Mucosa of descending colon (tissue), 3 donors: ENCODE measurements at regions of chr17 and their contacts with region 1.

Region 1: DNA sequence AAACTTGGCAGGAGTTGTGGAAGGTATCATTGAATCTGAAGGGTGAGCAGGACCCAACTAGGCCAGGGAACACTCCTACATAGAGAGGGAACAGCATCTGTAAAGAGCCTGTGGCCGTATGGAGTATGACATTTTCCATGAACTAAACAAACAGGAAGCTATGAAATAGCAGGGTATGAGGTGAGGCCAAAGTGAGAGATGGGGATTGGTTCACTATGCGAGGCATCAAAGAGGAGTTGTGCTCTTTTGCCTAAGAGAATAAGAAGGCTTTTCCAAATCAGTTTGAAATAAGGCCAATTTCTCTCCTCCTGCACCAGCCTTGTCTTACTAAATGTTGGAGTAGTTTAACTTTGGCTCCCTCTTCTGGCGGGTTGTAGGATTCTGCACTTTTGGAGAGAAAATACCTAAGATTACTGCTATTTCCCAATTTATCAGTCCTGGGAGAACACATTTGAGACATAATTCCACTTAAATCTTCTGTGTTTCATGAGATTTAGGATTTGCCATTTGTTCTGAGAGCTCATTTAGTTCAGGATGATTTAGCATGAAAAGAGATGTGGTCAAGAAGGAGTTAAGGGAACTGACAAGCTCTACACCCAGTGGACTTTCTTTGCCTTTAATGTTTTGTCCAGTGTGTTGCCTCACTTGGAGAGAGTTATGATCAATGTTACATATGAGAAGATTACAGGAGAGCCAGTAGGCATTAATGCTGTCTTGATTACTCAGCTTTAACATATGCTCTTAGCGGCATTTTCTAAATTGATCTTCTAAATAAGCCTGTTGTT is 55.4 kb downstream of the TNRC6C start:
- DNase-seq: peak in 1 of 3 donors; percentile 81
- ATAC-seq: peak; percentile 43
- H3K4me3 ChIP-seq: no peak overlapping the region
- H3K4me1 ChIP-seq: peaks cover 6% of the 10 kb centered on the region
- CTCF ChIP-seq: peak; percentile 41

Region 2: GRCh38 chr17:77542551-77543490 is 471.1 kb before region 1 on chr17:
- intact Hi-C with region 1: loop called (anchors 10 kb)
- DNase-seq: peak in 2 of 3 donors; percentile 76 to 86
- ATAC-seq: peak; percentile 88
- H3K4me3 ChIP-seq: no peak overlapping the region
- H3K4me1 ChIP-seq: peaks cover 6% of the 10 kb centered on the region
- CTCF ChIP-seq: peak; percentile 82

Region 3: GRCh38 chr17:77772461-77772897 is 241.4 kb before region 1 on chr17:
- intact Hi-C with region 1: loop called in 1 of 2 experiments (anchors 5 kb)
- DNase-seq: peak; percentile 66 to 79 (median 69)
- ATAC-seq: peak; percentile 92
- H3K4me3 ChIP-seq: no peak overlapping the region
- H3K4me1 ChIP-seq: peaks cover 3% of the 10 kb centered on the region
- CTCF ChIP-seq: peak; percentile 72

Region 4: GRCh38 chr17:78063489-78063888 is 49.6 kb after region 1 on chr17:
- intact Hi-C with region 1: no loop called
- DNase-seq: no peak
- ATAC-seq: no peak
- H3K4me3 ChIP-seq: no peak overlapping the region
- H3K4me1 ChIP-seq: no peaks in the 10 kb centered on the region
- CTCF ChIP-seq: no peak